Heart left ventricle (tissue), 16 donors: ENCODE measurements at regions of chr4 and their contacts with region 1.

Region 1: GRCh38 chr4:74376888-74377483 is 12.0 kb downstream of the EREG start:
- DNase-seq: no peak
- ATAC-seq: peak; percentile 63 to 73 (median 70)
- H3K4me3 ChIP-seq: no peak overlapping the region
- H3K27ac ChIP-seq: no peak overlapping the region
- H3K4me1 ChIP-seq: no peaks in the 10 kb centered on the region
- H3K27me3 ChIP-seq: no peaks in the 10 kb centered on the region
- CTCF ChIP-seq: peak; percentile 40 to 74 (median 62)
- POLR2A ChIP-seq: no peak

Region 2: DNA sequence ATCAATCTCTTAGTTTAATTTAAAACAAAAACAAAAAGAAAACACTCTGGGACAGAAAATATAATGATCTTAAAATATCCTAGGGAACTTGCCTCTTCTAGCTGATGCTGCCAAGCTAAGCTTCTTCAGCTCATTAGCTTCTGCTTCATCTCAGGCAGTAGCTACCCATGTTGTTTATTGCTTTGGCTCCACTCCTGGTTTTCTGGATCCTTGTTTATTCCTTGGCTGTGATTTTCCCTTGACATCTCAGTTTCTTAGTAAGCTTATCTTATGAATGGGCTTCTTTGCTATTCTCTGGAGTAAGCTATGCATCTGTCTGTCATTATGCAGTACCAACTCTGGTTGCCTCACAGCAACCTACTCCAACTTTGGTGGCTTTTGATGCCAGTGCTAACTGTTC is 224.2 kb before region 1 on chr4:
- intact Hi-C with region 1: no loop called
- DNase-seq: no peak
- ATAC-seq: no peak
- H3K4me3 ChIP-seq: no peak overlapping the region
- H3K27ac ChIP-seq: no peak overlapping the region
- H3K4me1 ChIP-seq: peaks cover 0 to 9% (median 6%) of the 10 kb centered on the region in 12 donors
- H3K27me3 ChIP-seq: no peaks in the 10 kb centered on the region
- CTCF ChIP-seq: no peak
- POLR2A ChIP-seq: no peak

Region 3: GRCh38 chr4:74444891-74445642 is 68.1 kb after region 1 on chr4 and contains the start of gene AREG:
- intact Hi-C with region 1: loop called in 6 of 10 experiments (anchors 1 to 10 kb)
- DNase-seq: peak; percentile 63 to 86 (median 81)
- ATAC-seq: peak; percentile 87 to 93 (median 88)
- H3K4me3 ChIP-seq: peak within 1 kb of the TSS; percentile 35 to 77 (median 64)
- H3K27ac ChIP-seq: peak within 1 kb of the TSS in 11 of 12 donors; percentile 21 to 87 (median 64)
- H3K4me1 ChIP-seq: peaks cover 0 to 15% (median 0%) of the 10 kb centered on the region in 12 donors
- H3K27me3 ChIP-seq: no peaks in the 10 kb centered on the region
- CTCF ChIP-seq: peak in 11 of 12 donors; percentile 22 to 57 (median 48)
- POLR2A ChIP-seq: peak in 1 of 2 donors; percentile 66
- total RNA-seq, gene AREG: 0.27 to 9.1 (median 1.9) TPM

Region 4: DNA sequence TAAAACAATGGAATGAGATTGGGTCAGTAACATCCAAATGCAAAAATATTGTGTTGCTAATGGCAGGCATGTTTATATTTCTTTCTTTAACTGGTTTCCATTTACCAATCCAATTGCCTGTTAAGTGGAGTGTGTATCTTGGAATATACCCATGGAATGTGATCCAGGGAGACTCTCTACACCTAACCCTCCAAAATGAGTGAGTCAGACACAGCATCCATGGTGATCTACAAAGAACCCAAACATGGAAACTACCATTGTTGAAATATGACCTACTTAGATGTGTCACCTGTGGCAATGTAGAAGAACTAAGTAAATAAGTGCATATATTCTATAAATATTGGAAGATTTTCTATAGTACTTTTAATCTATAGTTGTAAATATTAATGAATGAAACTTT is 178.2 kb after region 1 on chr4:
- intact Hi-C with region 1: no loop called
- DNase-seq: no peak
- ATAC-seq: no peak
- H3K4me3 ChIP-seq: no peak overlapping the region
- H3K27ac ChIP-seq: no peak overlapping the region
- H3K4me1 ChIP-seq: no peaks in the 10 kb centered on the region
- H3K27me3 ChIP-seq: no peaks in the 10 kb centered on the region
- CTCF ChIP-seq: no peak
- POLR2A ChIP-seq: no peak

Region 5: DNA sequence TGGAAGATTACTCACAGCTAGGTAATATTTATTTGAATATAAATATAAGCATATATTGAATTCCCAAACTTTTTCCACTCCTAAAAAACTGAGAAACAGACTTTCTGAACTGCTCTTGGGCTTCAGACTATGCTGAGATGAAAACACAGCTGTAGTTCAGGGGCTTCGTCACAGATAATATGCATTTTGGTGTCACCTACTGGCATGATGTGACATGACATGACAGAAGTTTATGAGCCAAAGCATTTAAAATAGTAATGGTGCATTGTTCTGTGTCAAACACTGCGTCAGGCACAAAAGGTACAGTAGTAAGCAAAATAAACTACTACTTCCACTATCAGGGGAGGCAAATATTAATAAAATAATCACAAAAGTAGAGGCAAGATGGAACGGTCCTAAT is 246.1 kb after region 1 on chr4:
- intact Hi-C with region 1: loop called in 5 of 10 experiments (anchors 5 kb)
- DNase-seq: no peak
- ATAC-seq: peak in 3 of 4 donors; percentile 49 to 64 (median 52)
- H3K4me3 ChIP-seq: no peak overlapping the region
- H3K27ac ChIP-seq: no peak overlapping the region
- H3K4me1 ChIP-seq: peaks cover 0 to 23% (median 4%) of the 10 kb centered on the region in 12 donors
- H3K27me3 ChIP-seq: no peaks in the 10 kb centered on the region
- CTCF ChIP-seq: peak in 11 of 12 donors; percentile 27 to 54 (median 46)
- POLR2A ChIP-seq: no peak